AG04449 (cell line): ENCODE measurements at regions of chr17 and their contacts with region 1.

Region 1: GRCh38 chr17:8997994-8998628 is 23.2 kb upstream of the NTN1 start:
- DNase-seq: no peak
- H3K4me3 ChIP-seq: no peak overlapping the region
- CTCF ChIP-seq: peak; percentile 77

Region 2: DNA sequence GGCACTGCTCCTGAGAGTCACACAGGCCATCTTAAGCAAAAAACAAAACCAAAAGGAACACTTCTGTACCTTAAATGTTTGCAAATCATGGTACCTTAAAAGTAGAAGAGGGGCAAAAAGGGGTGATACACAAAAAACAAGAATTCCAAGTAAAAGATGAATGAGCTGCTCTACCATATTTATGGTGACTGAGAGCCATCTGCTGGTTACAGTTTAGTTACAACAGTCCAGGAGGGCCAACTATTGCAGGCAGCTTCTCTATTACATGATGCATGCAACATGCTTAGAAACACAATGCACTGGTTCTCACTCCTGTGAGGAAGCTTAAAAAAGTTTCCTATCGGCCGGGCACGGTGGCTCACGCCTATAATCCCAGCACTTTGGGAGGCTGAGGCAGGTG is 524.0 kb after region 1 on chr17:
- CTCF ChIA-PET with region 1: interaction called, 113 read pairs
- POLR2A ChIA-PET with region 1: no interaction called
- DNase-seq: no peak
- H3K4me3 ChIP-seq: no peak overlapping the region
- CTCF ChIP-seq: peak; percentile 58